Dorsolateral prefrontal cortex (tissue), 120 donors: ENCODE measurements at regions of chr7 and their contacts with region 1.

Region 1: DNA sequence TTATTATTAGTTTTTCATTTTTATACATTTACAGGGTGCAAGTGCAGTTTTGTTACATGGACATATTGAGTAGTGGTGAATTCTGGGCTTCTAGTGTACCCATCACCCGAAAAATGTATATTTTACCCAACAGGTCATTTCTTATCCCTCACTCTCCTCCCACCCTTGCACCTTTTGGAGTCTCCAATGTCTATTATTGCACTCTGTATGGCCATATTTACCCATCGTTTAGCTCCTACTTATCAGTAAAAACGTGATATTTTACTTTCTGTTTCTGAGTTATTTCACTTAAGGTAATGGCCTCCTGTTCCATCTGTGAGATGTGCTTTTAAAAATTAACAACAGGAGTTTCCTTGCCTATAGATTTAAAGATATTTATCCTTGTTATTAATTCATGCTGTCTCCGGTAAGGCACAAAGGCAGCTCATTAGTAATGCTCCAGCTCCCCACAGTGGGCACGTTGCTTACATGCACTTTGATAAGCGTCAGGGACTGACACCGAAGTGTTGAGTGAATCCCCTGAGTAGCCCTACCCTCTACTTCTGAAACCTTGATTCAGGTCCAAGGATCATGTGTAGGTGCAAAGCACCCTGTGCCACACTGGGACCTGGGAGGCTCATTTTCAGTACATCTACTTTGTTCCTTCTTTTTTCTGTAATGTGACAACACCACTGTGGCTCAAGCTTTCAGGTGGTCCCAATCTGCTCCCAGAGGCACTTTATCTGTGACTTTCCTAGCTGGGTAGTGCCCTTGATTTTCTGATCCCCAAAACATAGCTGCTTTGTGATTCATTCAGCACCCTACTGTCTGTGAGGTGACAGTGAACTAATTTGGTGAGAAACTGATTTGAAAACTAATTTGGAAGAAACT is 27.3 kb downstream of the HYAL4 start:
- DNase-seq: peak in 3 of 10 donors; percentile 37 to 55 (median 51)
- H3K4me3 ChIP-seq: no peak overlapping the region
- H3K27ac ChIP-seq: no peak overlapping the region
- H3K27me3 ChIP-seq: no peaks in the 10 kb centered on the region
- CTCF ChIP-seq: peak in 48 of 56 donors; percentile 12 to 70 (median 42)

Region 2: GRCh38 chr7:123797673-123798527 is 74.3 kb before region 1 on chr7:
- intact Hi-C with region 1: loop called (anchors 5 kb)
- DNase-seq: no peak
- H3K4me3 ChIP-seq: no peak overlapping the region
- H3K27ac ChIP-seq: no peak overlapping the region
- H3K27me3 ChIP-seq: no peaks in the 10 kb centered on the region
- CTCF ChIP-seq: peak; percentile 54 to 87 (median 70)